Mammary epithelial cell (primary cell): ENCODE measurements at regions of chr16 and their contacts with region 1.

Region 1: GRCh38 chr16:53839150-53839549 is 135.2 kb downstream of the FTO start:
- DNase-seq: peak; percentile 70
- H3K4me3 ChIP-seq: peak overlapping the region in 1 of 3 experiments; percentile 19
- H3K27ac ChIP-seq: peak overlapping the region; percentile 90
- H3K4me1 ChIP-seq: peaks cover 4% of the 10 kb centered on the region
- H3K27me3 ChIP-seq: no peaks in the 10 kb centered on the region
- CTCF ChIP-seq: no peak

Region 2: GRCh38 chr16:53817117-53817755 is 21.9 kb before region 1 on chr16:
- CTCF ChIA-PET with region 1: no interaction called
- dilution Hi-C with region 1: no loop called
- in situ Hi-C with region 1: no loop called
- intact Hi-C with region 1: loop called (anchors 1 kb)
- DNase-seq: peak; percentile 87
- H3K4me3 ChIP-seq: no peak overlapping the region
- H3K27ac ChIP-seq: peak overlapping the region; percentile 87
- H3K4me1 ChIP-seq: peaks cover 40% of the 10 kb centered on the region
- H3K27me3 ChIP-seq: no peaks in the 10 kb centered on the region
- CTCF ChIP-seq: no peak

Region 3: GRCh38 chr16:53827741-53828140 is 11.4 kb before region 1 on chr16:
- CTCF ChIA-PET with region 1: no interaction called
- dilution Hi-C with region 1: no loop called
- in situ Hi-C with region 1: no loop called
- intact Hi-C with region 1: loop called (anchors 1 kb)
- DNase-seq: peak; percentile 69
- H3K4me3 ChIP-seq: no peak overlapping the region
- H3K27ac ChIP-seq: peak overlapping the region; percentile 66
- H3K4me1 ChIP-seq: peaks cover 20% of the 10 kb centered on the region
- H3K27me3 ChIP-seq: no peaks in the 10 kb centered on the region
- CTCF ChIP-seq: no peak

Region 4: DNA sequence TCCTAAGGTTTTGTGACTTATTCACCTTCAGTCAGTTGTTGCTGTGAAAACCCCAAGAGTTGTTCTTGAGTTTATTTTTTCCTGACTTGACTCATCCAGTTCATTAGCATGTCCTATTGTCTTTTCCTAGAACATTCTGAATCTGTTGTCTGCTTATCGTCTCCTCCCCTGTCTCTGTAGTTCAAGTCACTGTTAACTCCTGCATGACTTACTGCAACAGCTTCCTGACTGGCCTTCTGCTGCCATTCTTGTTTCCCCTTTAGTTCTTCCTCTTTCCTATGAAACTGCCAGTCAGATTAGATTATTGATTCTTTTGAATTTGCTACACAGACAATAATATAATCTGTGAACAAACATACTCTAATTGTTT is 26.3 kb after region 1 on chr16:
- CTCF ChIA-PET with region 1: no interaction called
- dilution Hi-C with region 1: no loop called
- in situ Hi-C with region 1: no loop called
- intact Hi-C with region 1: loop called (anchors 2 kb)
- DNase-seq: peak; percentile 84
- H3K4me3 ChIP-seq: no peak overlapping the region
- H3K27ac ChIP-seq: peak overlapping the region; percentile 97
- H3K4me1 ChIP-seq: peaks cover 24% of the 10 kb centered on the region
- H3K27me3 ChIP-seq: no peaks in the 10 kb centered on the region
- CTCF ChIP-seq: no peak